ENCODE measurements at regions of chr13 and their contacts with region 1.

Region 1: DNA sequence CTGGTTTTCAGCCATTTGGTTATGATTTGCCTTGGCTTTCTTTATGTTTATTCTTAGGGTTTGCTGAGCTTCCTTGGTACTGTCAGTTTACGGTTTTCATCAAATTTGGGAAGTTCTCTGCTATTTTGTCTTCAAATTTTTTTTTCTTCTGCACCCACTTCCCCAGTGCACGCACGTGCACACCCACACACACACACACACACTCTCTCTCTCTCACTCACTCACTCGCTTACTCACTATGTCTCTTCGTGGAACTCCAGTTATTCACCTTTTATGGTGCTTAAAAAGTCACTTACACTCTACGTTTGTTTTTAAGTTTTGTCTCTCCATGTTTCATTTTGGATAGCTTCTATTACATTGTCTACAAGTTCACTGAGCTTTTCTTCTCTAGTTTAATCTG is 7.1 kb downstream of the AKAP11 start:
- DNase-seq: peak; percentile 44
- H3K4me3 Mint-ChIP-seq: no peak overlapping the region
- H3K27ac Mint-ChIP-seq: no peak overlapping the region
- H3K4me1 Mint-ChIP-seq: peaks cover 42% of the 10 kb centered on the region
- H3K27me3 Mint-ChIP-seq: no peaks in the 10 kb centered on the region

Region 2: DNA sequence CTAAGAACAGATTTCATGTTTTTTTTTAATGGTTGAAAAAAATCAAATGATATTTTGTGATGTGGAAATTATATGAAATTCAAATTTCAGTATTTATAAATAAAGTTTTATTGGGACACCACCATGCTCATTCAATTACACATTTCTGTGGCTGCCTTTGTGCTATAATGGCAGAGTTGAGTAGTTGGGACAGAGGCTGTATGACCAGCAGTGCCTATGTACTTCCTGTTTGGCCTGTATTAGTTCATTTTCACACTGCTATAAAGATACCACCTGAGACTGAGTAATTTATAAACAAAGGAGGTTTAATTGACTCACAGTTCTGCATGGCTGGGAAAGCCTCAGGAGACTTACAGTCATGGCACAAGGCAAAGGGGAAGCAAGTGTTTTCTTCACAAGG is 26.4 kb after region 1 on chr13:
- CTCF ChIA-PET with region 1: no interaction called
- intact Hi-C with region 1: loop called (anchors 2 kb)
- DNase-seq: no peak
- H3K4me3 Mint-ChIP-seq: no peak overlapping the region
- H3K27ac Mint-ChIP-seq: no peak overlapping the region
- H3K4me1 Mint-ChIP-seq: peaks cover 25% of the 10 kb centered on the region
- H3K27me3 Mint-ChIP-seq: no peaks in the 10 kb centered on the region

Measured in activated naive CD4-positive, alpha-beta T cell treated with anti-CD3 and anti-CD28 coated beads for 36 hours (primary cell).